ENCODE measurements at regions of chr9 and their contacts with region 1.

Region 1: DNA sequence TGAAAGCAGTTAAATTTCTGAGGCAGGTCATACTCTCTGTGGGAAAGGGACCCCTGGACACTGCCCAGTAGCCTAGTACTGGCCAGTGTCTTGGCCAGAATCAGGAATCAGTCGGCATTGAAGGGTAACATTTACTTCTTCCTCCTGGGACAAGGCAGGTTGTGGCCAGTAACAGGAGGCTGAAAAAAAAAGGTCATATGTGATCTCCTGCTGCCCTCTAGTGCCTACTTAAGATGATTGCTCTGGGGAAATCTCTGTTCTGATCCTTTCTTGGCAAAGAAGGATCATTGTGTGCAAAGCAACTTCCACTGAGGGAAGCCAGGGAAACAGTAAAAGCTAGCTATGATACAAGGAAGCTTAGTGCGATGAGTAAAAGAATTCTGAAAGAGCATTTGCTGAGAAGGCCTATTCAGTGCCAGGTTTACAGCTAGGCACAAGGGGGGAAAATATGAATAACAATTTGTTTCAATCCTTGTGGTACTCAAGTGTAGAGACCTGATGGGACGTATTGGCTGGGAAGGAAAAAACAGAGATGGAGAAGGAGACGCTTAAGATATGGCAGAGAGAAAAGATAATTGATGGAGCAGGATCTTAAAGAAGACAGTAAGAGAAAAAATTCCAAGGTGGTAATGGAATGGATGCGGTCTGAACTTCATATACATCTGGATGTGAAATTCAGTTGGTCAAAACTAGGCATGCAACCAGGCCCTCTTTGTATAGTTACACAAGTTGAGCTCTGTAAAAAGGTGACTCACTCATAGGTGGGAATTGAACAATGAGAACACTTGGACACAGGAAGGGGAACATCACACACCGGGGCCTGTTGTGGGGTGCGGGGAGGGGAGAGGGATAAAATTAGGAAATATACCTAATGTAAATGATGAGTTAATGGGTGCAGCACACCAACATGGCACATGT is 25.8 kb upstream of the TRIM32 start:
- DNase-seq: peak; percentile 67
- H3K4me3 ChIP-seq: no peak overlapping the region
- H3K27ac ChIP-seq: peak overlapping the region; percentile 32
- H3K4me1 ChIP-seq: peaks cover 20% of the 10 kb centered on the region
- H3K27me3 ChIP-seq: no peaks in the 10 kb centered on the region
- CTCF ChIP-seq: peak; percentile 75 to 82

Region 2: DNA sequence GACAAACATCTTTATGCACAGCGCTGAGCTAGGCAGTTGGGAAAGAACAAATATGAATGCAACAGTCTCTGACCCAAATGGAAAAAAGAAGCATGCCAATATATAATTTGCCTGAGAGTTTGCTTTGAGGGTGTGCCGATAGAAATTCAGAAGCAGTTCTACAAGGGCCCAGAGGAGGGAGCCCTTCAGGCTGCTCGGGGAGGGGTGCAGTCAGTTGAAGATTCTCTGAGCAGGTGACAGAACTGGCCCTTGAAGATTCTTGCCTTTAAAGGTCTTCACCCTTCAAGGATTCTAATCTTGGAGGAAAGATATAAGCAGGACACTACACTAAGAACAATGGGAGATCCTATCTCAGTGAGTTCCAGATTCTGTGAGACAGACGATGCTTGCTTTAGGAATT is 511.5 kb before region 1 on chr9:
- CTCF ChIA-PET with region 1: no interaction called
- dilution Hi-C with region 1: no loop called
- in situ Hi-C with region 1: no loop called
- intact Hi-C with region 1: loop called (anchors 2 kb)
- DNase-seq: no peak
- H3K4me3 ChIP-seq: no peak overlapping the region
- H3K27ac ChIP-seq: no peak overlapping the region
- H3K4me1 ChIP-seq: peaks cover 18% of the 10 kb centered on the region
- H3K27me3 ChIP-seq: peaks cover 6% of the 10 kb centered on the region
- CTCF ChIP-seq: peak; percentile 69 to 79

Region 3: DNA sequence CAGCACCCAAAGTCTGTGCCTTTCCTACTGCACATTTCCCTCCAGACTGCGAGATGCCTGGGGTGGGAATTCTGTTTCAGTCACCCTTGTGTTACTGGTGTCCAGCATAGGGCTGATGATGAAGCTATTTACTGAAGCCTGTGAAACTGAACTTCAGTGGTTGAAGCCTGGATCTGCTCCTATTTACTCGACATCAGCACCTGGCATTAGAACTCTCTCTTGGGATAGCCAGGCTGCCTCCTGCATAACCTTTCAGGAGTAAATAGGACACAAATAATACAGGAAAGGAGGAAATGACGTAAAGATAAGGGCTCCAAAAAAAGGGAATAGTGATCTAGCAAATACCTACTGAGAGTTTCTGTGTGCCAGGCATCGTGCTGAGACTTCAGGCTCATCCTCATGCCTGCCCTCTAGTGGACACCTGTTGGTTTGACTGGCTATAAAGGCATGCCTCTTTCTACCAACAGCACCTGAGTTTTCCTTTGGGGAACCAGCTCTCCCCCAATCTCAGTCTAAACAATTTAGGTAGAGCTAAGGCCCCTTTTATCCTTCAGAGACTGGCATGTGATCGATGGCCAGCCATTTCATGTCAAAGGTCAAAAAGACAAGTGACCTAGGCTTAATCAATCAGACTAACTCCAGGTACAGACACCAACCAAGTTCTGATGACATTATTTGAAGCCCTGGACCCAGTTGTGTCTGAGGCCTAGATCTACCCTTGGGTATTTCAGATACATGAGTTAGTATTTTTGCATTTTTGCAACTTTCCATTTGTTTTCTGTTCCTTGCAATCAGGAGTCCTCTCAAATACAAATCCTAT is 166.3 kb before region 1 on chr9:
- CTCF ChIA-PET with region 1: no interaction called
- dilution Hi-C with region 1: no loop called
- in situ Hi-C with region 1: no loop called
- intact Hi-C with region 1: loop called (anchors 5 kb)
- DNase-seq: no peak
- H3K4me3 ChIP-seq: no peak overlapping the region
- H3K27ac ChIP-seq: no peak overlapping the region
- H3K4me1 ChIP-seq: no peaks in the 10 kb centered on the region
- H3K27me3 ChIP-seq: no peaks in the 10 kb centered on the region
- CTCF ChIP-seq: peak; percentile 83 to 86

Region 4: DNA sequence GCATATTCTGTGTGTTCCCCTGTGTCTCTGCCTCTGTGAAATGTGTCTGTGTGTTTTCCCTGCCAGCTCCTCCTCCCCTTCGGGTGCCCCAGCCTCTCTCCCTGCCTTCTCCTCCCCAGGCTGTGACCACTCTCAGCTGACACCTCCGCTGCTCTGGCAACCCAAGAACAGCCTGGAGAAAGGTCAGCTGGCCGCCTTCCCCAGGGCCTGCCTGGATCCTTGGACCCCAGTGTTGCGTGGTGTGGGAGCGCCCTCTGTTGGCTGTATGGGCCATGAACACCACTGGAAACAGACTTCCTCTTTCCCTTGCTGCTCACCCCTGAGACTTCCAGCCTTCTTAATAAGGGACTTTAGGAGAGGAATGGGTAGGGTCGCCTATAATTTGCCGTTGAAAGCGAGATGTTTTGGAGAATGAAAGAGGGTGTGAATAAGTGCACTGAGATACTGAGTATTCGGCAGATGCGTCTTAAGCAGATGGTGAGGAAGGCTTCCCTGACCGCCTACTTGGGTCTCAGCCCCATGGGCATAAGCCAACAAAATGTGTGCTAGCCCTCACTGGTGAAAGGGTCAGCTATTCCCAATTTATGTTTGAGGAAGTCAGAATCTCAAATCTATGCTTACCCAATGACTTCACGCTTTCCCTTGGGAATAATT is 89.1 kb before region 1 on chr9:
- CTCF ChIA-PET with region 1: no interaction called
- dilution Hi-C with region 1: no loop called
- in situ Hi-C with region 1: no loop called
- intact Hi-C with region 1: no loop called
- DNase-seq: peak; percentile 48
- H3K4me3 ChIP-seq: no peak overlapping the region
- H3K27ac ChIP-seq: no peak overlapping the region
- H3K4me1 ChIP-seq: no peaks in the 10 kb centered on the region
- H3K27me3 ChIP-seq: no peaks in the 10 kb centered on the region
- CTCF ChIP-seq: peak; percentile 90 to 96

Region 5: GRCh38 chr9:116589392-116590354 is 71.6 kb before region 1 on chr9:
- CTCF ChIA-PET with region 1: no interaction called
- dilution Hi-C with region 1: no loop called
- in situ Hi-C with region 1: no loop called
- intact Hi-C with region 1: loop called (anchors 1 kb)
- DNase-seq: peak; percentile 72
- H3K4me3 ChIP-seq: no peak overlapping the region
- H3K27ac ChIP-seq: no peak overlapping the region
- H3K4me1 ChIP-seq: no peaks in the 10 kb centered on the region
- H3K27me3 ChIP-seq: no peaks in the 10 kb centered on the region
- CTCF ChIP-seq: peak; percentile 65 to 81

Region 6: GRCh38 chr9:117081641-117082317 is 420.5 kb after region 1 on chr9:
- CTCF ChIA-PET with region 1: no interaction called
- dilution Hi-C with region 1: no loop called
- in situ Hi-C with region 1: no loop called
- intact Hi-C with region 1: no loop called
- DNase-seq: no peak
- H3K4me3 ChIP-seq: no peak overlapping the region
- H3K27ac ChIP-seq: no peak overlapping the region
- H3K4me1 ChIP-seq: no peaks in the 10 kb centered on the region
- H3K27me3 ChIP-seq: no peaks in the 10 kb centered on the region
- CTCF ChIP-seq: no peak